A549 (cell line): ENCODE measurements at regions of chr6 and their contacts with region 1.

Region 1: DNA sequence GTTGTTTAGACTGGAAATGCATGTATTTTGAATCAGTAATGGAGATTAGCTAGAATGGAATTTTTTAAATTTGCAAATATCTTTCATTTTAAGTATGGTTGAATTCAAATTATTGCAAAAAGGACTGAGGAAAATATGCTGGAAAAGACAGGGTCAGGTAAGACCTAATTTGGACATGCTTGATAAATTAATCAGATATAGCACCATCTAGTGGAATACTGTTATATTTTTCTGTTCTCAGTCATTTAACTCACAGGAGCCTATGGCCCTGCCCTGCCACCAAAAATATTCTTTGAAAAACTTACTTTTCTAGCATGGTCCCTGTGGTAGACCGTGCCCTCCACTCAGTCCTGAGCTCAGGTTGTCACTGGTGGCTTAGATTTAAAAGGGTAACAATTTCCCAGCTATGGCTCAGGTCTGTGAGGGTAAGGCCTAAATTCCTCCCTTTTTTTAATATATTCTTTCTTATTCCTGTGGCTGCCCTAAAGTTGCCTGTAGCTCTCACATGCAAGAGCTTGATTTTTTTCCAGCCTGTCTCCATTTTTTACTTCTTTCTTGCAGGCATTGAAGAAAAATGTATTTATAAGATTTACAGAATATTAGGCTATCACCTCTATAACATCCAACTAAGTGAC is 25.3 kb upstream of the KIAA1586 start:
- DNase-seq: peak; percentile 36 to 42
- ATAC-seq: peak; percentile 81
- H3K4me3 ChIP-seq: no peak overlapping the region
- H3K27ac ChIP-seq: no peak overlapping the region
- H3K4me1 ChIP-seq: no peaks in the 10 kb centered on the region
- CTCF ChIP-seq: peak; percentile 65
- EP300 ChIP-seq: no peak
- POLR2A ChIP-seq: no peak
- RAD21 ChIP-seq: peak; percentile 37 to 51; a peak in 4 of 5 replicates

Region 2: GRCh38 chr6:56927538-56928453 is 93.4 kb before region 1 on chr6:
- CTCF ChIA-PET with region 1: no interaction called
- POLR2A ChIA-PET with region 1: no interaction called
- DNase-seq: no peak
- ATAC-seq: no peak
- H3K4me3 ChIP-seq: no peak overlapping the region
- H3K27ac ChIP-seq: peak overlapping the region in 1 of 2 experiments; percentile 17; a peak in 1 of 6 replicates
- H3K4me1 ChIP-seq: peaks cover 11% of the 10 kb centered on the region; the same call in 2 of the 3 replicates
- CTCF ChIP-seq: no peak
- EP300 ChIP-seq: no peak
- POLR2A ChIP-seq: no peak
- RAD21 ChIP-seq: no peak

Region 3: GRCh38 chr6:56955171-56956045 is 65.8 kb before region 1 on chr6:
- CTCF ChIA-PET with region 1: interaction called, 29 read pairs
- POLR2A ChIA-PET with region 1: no interaction called
- DNase-seq: peak; percentile 67 to 90
- ATAC-seq: peak; percentile 81 to 90
- H3K4me3 ChIP-seq: peak overlapping the region; percentile 89
- H3K27ac ChIP-seq: peak overlapping the region; percentile 95 to 97
- H3K4me1 ChIP-seq: peaks cover 46% of the 10 kb centered on the region
- CTCF ChIP-seq: peak; percentile 81
- EP300 ChIP-seq: no peak
- POLR2A ChIP-seq: peak; percentile 15; the same call in 1 of the 2 replicates
- RAD21 ChIP-seq: peak; percentile 63 to 73

Region 4: DNA sequence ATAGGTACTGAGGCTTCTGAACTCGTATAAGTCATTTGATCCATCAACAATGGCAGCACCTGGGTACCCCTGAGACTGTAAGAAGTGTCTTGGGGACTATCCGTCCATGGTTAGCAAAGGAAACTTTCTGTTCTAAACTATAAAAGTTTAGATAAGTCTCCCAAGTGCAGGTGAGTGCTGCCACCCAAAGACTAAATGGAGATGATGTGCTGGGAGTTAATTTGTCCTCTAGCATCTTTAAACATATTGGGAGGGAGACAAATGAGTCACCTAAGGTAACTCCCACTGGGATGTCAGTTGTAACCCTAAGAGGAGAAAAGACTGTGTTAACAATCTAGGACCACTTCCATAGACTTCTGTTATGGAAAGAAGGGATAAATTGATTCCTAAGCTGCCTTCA is 60.0 kb before region 1 on chr6:
- CTCF ChIA-PET with region 1: interaction called, 29 read pairs
- POLR2A ChIA-PET with region 1: no interaction called
- DNase-seq: peak in 1 of 2 experiments; percentile 10
- ATAC-seq: no peak
- H3K4me3 ChIP-seq: no peak overlapping the region
- H3K27ac ChIP-seq: no peak overlapping the region
- H3K4me1 ChIP-seq: peaks cover 19% of the 10 kb centered on the region
- CTCF ChIP-seq: no peak
- EP300 ChIP-seq: no peak
- POLR2A ChIP-seq: no peak
- RAD21 ChIP-seq: peak in 1 of 2 experiments; percentile 32; a peak in 2 of 5 replicates